Tibial artery (tissue), 4 donors: ENCODE measurements at regions of chr22 and their contacts with region 1.

Region 1: GRCh38 chr22:42090596-42091454 is at the start of gene NDUFA6:
- DNase-seq: peak; percentile 99
- H3K4me3 ChIP-seq: peak within 1 kb of the TSS; percentile 60 to 73
- H3K27ac ChIP-seq: peak within 1 kb of the TSS; percentile 80 to 91
- H3K4me1 ChIP-seq: peaks cover 0 to 33% (median 9%) of the 10 kb centered on the region in 4 donors
- H3K27me3 ChIP-seq: no peaks in the 10 kb centered on the region
- CTCF ChIP-seq: peak; percentile 86 to 96

Region 2: GRCh38 chr22:41976401-41976901 is 114.4 kb before region 1 on chr22:
- intact Hi-C with region 1: no loop called
- DNase-seq: no peak
- H3K4me3 ChIP-seq: peak overlapping the region; percentile 33 to 50
- H3K27ac ChIP-seq: no peak overlapping the region
- H3K4me1 ChIP-seq: peaks cover 0 to 14% (median 11%) of the 10 kb centered on the region in 4 donors
- H3K27me3 ChIP-seq: peaks cover 0 to 75% of the 10 kb centered on the region in 2 donors
- CTCF ChIP-seq: no peak

Region 3: DNA sequence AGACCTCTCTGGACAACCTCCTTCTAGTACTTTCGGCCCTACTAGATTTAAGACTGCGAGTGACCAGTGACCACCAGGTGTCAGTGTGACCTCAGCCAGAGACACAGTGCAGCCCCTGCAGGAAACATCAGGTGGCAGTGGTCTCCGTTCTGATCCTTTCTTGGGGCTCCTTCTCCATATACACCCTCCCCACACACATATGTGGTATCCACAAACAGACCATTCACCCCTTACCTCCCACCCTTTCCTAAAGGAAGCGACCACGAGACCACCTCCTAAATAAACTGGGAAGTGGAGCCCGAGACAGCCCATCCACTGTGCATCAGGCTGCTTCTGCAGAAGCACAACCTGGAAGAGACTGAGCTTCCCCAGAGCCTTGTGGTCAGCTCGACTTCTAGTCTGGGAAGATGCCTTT is 78.2 kb after region 1 on chr22:
- intact Hi-C with region 1: loop called (anchors 10 kb)
- DNase-seq: peak in 1 of 2 donors; percentile 65
- H3K4me3 ChIP-seq: no peak overlapping the region
- H3K27ac ChIP-seq: no peak overlapping the region
- H3K4me1 ChIP-seq: peaks cover 0 to 18% (median 10%) of the 10 kb centered on the region in 4 donors
- H3K27me3 ChIP-seq: no peaks in the 10 kb centered on the region
- CTCF ChIP-seq: peak; percentile 75 to 79

Region 4: DNA sequence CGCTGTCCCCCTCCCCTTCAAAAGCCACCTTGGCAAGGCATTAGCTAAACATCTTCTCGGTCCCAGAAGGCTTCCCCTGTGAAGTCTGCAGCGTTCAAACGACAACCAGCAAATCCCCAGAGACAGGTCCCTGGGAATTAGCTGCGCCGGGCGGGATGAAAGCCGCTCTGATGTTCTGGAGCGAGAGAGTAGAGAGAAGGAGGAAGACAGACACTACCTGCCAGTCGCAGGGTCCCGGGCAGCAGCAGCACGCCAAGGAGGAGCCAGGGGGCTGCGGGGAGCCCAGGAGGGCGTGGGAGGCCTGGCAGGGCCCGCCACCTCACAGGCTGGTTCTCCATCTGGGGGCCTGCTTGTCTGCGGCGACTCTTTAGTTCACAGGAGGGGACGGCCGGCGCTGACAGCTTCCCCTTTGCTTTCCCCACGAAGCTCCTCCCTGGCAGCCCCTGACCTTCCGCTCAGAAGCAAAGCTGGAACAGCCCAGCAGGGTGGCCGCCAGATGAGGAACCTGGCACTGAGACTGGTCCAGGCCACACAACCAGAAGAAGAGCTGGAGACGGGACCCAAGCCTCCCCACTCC is 341.3 kb after region 1 on chr22 and contains the start of gene NFAM1:
- intact Hi-C with region 1: loop called (anchors 2 kb)
- DNase-seq: peak; percentile 49 to 77
- H3K4me3 ChIP-seq: peak within 1 kb of the TSS; percentile 16 to 28
- H3K27ac ChIP-seq: no peak within 1 kb of the TSS
- H3K4me1 ChIP-seq: peaks cover 0 to 33% (median 4%) of the 10 kb centered on the region in 4 donors
- H3K27me3 ChIP-seq: peaks cover 0 to 86% of the 10 kb centered on the region in 2 donors
- CTCF ChIP-seq: no peak

Region 5: DNA sequence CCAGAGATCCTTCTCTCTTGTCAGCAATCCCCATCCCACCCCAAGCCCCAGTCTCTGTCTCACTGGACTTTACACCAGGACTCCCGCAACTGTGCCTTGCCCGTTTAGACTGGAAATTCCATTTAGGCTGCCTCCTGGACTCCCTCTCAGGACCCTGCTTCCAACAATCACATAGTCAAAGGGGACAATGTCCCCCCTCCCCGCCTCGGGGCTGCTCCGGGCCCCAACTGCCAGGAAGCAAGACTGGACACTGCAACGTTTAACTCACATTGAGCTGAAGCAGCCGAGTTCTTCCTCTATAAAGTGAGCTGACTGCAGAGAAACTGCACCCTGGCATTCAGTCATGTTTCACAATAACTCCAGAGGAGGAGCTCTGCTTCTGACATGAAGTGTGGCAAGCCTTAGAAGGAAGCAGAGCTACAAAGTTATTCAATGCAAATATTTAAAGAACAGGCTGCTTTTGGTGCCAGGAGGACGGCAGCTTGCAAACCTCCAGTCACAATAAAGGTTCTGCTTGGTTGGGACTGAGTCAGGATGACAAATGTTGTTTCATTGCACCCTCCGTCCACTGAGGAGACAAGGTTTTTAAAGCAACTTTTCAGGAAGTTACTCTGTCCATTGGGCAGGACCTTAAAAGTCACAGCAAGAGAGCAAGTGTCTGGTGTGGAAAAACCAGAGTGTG is 904.2 kb after region 1 on chr22:
- intact Hi-C with region 1: loop called (anchors 5 kb)
- DNase-seq: peak; percentile 74 to 84
- H3K4me3 ChIP-seq: peak overlapping the region; percentile 50 to 55
- H3K27ac ChIP-seq: peak overlapping the region; percentile 83 to 87
- H3K4me1 ChIP-seq: peaks cover 0 to 95% (median 75%) of the 10 kb centered on the region in 4 donors
- H3K27me3 ChIP-seq: no peaks in the 10 kb centered on the region
- CTCF ChIP-seq: no peak